ENCODE measurements at regions of chr1 and their contacts with region 1.

Region 1: GRCh38 chr1:10867138-10867721 is 70.8 kb upstream of the CASZ1 start:
- DNase-seq: peak in 1 of 2 donors; percentile 31
- H3K4me3 ChIP-seq: peak overlapping the region; percentile 22 to 76 (median 56)
- H3K27ac ChIP-seq: no peak overlapping the region
- H3K4me1 ChIP-seq: peaks cover 0 to 5% of the 10 kb centered on the region in 2 donors
- H3K27me3 ChIP-seq: peaks cover 0 to 8% of the 10 kb centered on the region in 2 donors
- CTCF ChIP-seq: peak in 2 of 3 donors; percentile 39 to 82
- POLR2A ChIP-seq: no peak

Region 2: GRCh38 chr1:9867408-9868243 is 999.6 kb before region 1 on chr1:
- intact Hi-C with region 1: no loop called
- DNase-seq: peak; percentile 77 to 82
- H3K4me3 ChIP-seq: no peak overlapping the region
- H3K27ac ChIP-seq: no peak overlapping the region
- H3K4me1 ChIP-seq: peaks cover 0 to 11% of the 10 kb centered on the region in 2 donors
- H3K27me3 ChIP-seq: no peaks in the 10 kb centered on the region
- CTCF ChIP-seq: peak; percentile 80 to 95 (median 92)
- POLR2A ChIP-seq: no peak

Region 3: DNA sequence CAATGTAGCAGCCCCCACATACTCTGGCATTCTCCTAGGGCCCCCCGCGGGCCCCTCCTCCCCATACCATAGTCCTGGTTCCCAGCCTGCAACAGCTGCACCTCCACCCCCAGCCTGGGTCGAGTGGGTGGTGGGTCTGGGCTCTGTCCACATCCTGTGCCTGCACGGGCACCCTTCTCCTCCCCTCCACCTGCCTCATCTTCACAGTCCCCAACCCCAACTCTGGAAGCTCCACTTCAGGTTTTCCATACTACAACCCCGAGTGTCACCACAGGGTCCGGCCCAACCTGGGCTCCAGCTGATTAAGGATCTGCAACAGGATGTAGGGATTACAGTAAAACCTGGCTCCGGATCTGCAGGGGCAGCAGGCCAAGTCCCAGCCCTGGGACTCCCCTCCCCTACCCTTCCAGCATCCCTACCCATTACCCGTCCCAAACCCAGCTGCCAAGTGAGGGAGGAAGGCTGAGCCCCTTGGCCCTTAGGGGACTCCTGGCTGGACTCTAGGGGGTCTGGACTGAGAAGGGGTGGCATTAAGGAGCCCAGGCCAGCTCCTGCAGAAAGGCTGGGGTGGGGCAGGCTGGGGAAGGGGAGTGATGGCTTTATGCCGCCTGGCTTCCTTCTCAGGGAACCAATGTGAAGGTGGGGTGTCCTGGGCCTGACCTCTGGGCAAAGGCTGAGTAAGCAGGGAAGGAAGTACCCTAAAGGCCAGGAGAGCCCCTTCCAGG is 187.6 kb before region 1 on chr1:
- intact Hi-C with region 1: loop called (anchors 10 kb)
- DNase-seq: peak; percentile 71 to 85
- H3K4me3 ChIP-seq: peak overlapping the region in 1 of 3 donors; percentile 5
- H3K27ac ChIP-seq: peak overlapping the region; percentile 37 to 57
- H3K4me1 ChIP-seq: peaks cover 7 to 16% of the 10 kb centered on the region in 2 donors
- H3K27me3 ChIP-seq: no peaks in the 10 kb centered on the region
- CTCF ChIP-seq: no peak
- POLR2A ChIP-seq: no peak